ENCODE measurements at regions of chr7 and their contacts with region 1.

Region 1: DNA sequence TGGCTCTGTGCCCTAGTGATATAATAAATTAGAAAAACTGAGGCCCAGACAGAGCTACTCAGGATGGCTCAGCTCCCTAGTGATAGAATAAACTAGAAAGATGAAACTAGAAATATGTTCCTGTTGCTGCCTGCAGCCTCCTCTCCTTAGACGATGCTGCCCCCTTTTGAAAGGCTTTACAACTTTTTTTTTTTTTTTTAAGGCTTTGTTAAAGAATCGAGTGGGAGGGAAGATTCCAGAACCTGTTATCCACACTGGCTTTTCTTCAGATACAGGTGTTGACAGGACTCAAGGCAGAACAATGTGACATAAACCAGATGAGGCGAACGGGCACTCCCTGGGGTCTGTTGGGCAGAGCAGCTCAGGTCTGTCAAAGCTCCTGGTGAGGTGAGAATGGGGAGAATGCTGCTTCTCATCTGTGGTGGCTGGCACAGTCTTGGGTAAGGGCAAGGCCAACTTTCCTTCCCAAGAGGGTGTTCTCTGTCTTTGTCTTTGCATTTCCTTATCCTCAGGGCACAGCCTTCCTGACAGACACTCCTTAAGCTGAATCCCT is 175.1 kb downstream of the COBL start:
- DNase-seq: peak; percentile 35
- ATAC-seq: peak; percentile 88
- H3K4me3 ChIP-seq: no peak overlapping the region
- H3K27ac ChIP-seq: no peak overlapping the region
- H3K4me1 ChIP-seq: no peaks in the 10 kb centered on the region
- H3K27me3 ChIP-seq: no peaks in the 10 kb centered on the region
- CTCF ChIP-seq: peak; percentile 80
- POLR2A ChIP-seq: 0 out of 2 replicates have a peak, but pooled peaks have one; percentile 29
- RAD21 ChIP-seq: peak; percentile 87

Region 2: GRCh38 chr7:50467817-50468610 is 673.5 kb before region 1 on chr7:
- CTCF ChIA-PET with region 1: interaction called, 25 read pairs
- POLR2A ChIA-PET with region 1: no interaction called
- dilution Hi-C with region 1: no loop called
- in situ Hi-C with region 1: loop called (anchors 5 kb)
- intact Hi-C with region 1: loop called (anchors 1 kb)
- DNase-seq: peak; percentile 58
- ATAC-seq: peak; percentile 100
- H3K4me3 ChIP-seq: no peak overlapping the region
- H3K27ac ChIP-seq: no peak overlapping the region
- H3K4me1 ChIP-seq: no peaks in the 10 kb centered on the region
- H3K27me3 ChIP-seq: peaks cover 19% of the 10 kb centered on the region
- CTCF ChIP-seq: peak; percentile 92
- POLR2A ChIP-seq: peak; percentile 36; the same call in 1 of the 2 replicates
- RAD21 ChIP-seq: peak; percentile 96

Region 3: GRCh38 chr7:50679218-50680007 is 462.1 kb before region 1 on chr7:
- CTCF ChIA-PET with region 1: interaction called, 4 read pairs
- POLR2A ChIA-PET with region 1: no interaction called
- dilution Hi-C with region 1: no loop called
- in situ Hi-C with region 1: no loop called
- intact Hi-C with region 1: loop called (anchors 5 kb)
- DNase-seq: peak; percentile 43
- ATAC-seq: peak; percentile 58
- H3K4me3 ChIP-seq: no peak overlapping the region
- H3K27ac ChIP-seq: no peak overlapping the region
- H3K4me1 ChIP-seq: peaks cover 3% of the 10 kb centered on the region; the same call in 1 of the 2 replicates
- H3K27me3 ChIP-seq: no peaks in the 10 kb centered on the region
- CTCF ChIP-seq: peak; percentile 45
- POLR2A ChIP-seq: no peak
- RAD21 ChIP-seq: peak; percentile 59

Region 4: GRCh38 chr7:51045319-51046102 is 96.0 kb before region 1 on chr7:
- CTCF ChIA-PET with region 1: interaction called, 10 read pairs
- POLR2A ChIA-PET with region 1: no interaction called
- dilution Hi-C with region 1: no loop called
- in situ Hi-C with region 1: no loop called
- intact Hi-C with region 1: no loop called
- DNase-seq: peak; percentile 82
- ATAC-seq: peak; percentile 89
- H3K4me3 ChIP-seq: no peak overlapping the region
- H3K27ac ChIP-seq: no peak overlapping the region
- H3K4me1 ChIP-seq: peaks cover 10% of the 10 kb centered on the region
- H3K27me3 ChIP-seq: peaks cover 42% of the 10 kb centered on the region
- CTCF ChIP-seq: no peak
- POLR2A ChIP-seq: no peak
- RAD21 ChIP-seq: no peak

Region 5: DNA sequence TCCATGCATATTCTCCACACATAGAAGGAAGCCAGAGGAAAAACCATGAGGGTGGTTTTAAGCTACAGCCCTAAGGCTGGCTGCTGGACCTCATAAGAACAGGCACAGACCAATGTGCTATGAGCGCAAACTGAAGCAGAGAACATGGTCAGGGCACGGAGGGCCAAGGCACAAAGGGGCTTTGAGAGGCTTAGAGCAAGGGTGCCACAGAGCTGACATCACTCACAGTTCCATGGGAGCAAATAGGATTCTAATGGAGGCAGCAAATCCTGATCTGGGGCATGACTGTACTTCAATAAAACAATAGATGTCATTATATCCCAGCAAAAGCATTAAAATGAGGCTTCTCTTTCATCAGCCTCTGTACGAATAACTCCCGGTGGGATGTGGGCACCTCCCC is 12.7 kb after region 1 on chr7:
- CTCF ChIA-PET with region 1: interaction called, 18 read pairs
- POLR2A ChIA-PET with region 1: no interaction called
- dilution Hi-C with region 1: no loop called
- in situ Hi-C with region 1: no loop called
- intact Hi-C with region 1: no loop called
- DNase-seq: no peak
- ATAC-seq: no peak
- H3K4me3 ChIP-seq: no peak overlapping the region
- H3K27ac ChIP-seq: no peak overlapping the region
- H3K4me1 ChIP-seq: no peaks in the 10 kb centered on the region
- H3K27me3 ChIP-seq: peaks cover 9% of the 10 kb centered on the region; the same call in 1 of the 2 replicates
- CTCF ChIP-seq: no peak
- POLR2A ChIP-seq: no peak
- RAD21 ChIP-seq: no peak

Measured in IMR-90 (cell line).